GM12878 (cell line): ENCODE measurements at regions of chr5 and their contacts with region 1.

Region 1: DNA sequence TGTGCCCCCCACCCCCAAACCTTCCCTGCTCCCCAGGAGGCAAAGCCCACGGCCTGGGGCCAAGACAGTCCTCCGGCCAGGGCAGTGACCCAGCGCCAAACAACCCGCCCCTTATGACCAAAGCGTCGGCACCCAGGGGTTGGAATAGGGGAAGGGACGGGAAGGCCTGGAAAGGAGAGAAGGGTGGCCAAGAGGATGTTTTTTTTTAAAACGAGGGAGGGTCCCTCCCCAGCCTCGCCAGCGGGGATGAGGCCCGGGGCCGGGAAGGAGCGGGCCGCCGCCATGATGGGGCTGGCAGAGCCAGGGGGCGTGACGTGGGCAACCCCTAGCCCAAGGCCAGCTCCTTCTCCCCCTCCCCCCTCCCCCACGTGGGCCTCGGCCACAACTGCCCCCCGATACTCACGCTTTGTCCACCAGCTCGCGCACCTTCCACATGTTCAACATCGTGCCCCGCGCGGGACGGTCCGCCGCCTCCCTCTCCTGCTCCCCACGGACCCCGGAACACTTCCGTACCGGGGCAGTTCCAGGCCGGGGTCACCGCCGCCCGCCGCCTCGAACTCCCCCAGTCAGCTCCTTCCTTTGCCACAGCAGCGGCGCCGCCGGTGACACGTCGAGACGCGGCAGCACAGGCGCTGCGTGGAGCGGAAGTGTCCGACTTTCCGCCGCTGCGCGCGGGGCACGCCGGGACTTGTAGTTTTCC is at the start of gene CLINT1:
- DNase-seq: no peak
- ATAC-seq: peak; percentile 69
- H3K4me3 ChIP-seq: peak within 1 kb of the TSS; percentile 87
- H3K27ac ChIP-seq: peak within 1 kb of the TSS; percentile 45
- H3K4me1 ChIP-seq: peaks cover 29% of the 10 kb centered on the region
- H3K27me3 ChIP-seq: no peaks in the 10 kb centered on the region
- CTCF ChIP-seq: no peak
- EP300 ChIP-seq: 0 out of 4 replicates have a peak, but pooled peaks of 1 of the 2 experiments have one; percentile 4
- POLR2A ChIP-seq: peak; percentile 82
- RAD21 ChIP-seq: no peak
- polyA plus RNA-seq, gene CLINT1: 30.0 to 40.2 TPM

Region 2: DNA sequence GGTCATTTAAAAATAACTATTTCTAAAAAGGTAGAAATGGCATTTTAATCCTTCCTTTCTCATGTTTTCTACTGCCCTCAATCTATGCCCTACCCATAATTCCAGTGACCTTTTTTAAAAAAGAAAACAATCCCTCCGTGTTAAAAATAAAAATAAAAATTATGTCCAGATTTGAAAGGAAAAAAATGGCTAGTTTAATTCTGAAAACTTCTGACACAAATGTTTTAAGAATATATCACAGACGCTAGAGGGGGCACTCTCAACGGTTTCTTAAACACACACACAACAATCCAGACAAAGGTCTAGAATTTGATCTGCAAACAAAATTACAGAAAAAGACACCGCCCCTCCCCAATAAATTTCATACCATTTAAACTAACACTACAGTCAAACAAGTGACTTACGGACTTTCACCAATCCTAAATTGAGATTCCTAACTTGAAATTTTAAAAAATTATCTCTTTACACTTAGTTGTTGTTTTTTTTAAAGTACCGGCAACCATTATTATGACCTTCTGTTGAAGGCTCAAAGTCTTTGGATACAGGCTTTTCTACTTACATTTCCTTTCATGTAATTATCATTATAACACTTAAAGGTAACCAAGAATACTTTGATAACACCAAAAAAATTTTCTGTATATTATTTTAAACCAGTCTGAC is 38.0 kb before region 1 on chr5:
- CTCF ChIA-PET with region 1: interaction called, 56 read pairs
- POLR2A ChIA-PET with region 1: interaction called, 5 read pairs
- RAD21 ChIA-PET with region 1: interaction called, 8 read pairs
- SMC1A ChIA-PET with region 1: interaction called, 40 read pairs
- in situ Hi-C with region 1: no loop called
- intact Hi-C with region 1: loop called (anchors 2 kb)
- DNase-seq: no peak
- ATAC-seq: peak; percentile 69
- H3K4me3 ChIP-seq: no peak overlapping the region
- H3K27ac ChIP-seq: no peak overlapping the region
- H3K4me1 ChIP-seq: no peaks in the 10 kb centered on the region
- H3K27me3 ChIP-seq: no peaks in the 10 kb centered on the region
- CTCF ChIP-seq: peak; percentile 39 to 56 (median 49); a peak in 5 of 6 replicates
- EP300 ChIP-seq: no peak
- POLR2A ChIP-seq: no peak
- RAD21 ChIP-seq: peak; percentile 63

Region 3: DNA sequence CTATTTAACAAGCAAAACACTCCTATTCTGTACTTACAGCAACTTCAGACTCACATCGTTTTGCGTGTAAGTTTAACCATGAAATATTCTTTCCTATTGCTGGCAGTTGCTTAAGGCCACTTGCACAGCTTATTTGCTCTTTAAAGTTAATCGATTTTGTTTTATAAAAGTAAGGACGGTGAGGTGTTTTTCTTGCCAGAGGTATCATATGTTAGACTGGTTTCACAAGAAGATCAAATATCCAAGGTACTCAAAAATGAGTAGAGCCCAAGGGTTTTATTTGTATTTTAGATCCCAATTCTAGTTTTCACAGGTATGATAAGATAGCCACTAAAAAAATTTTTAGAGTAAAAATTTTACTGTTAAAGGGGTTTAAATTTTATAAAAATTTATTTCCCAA is 15.9 kb before region 1 on chr5:
- CTCF ChIA-PET with region 1: interaction called, 8 read pairs
- POLR2A ChIA-PET with region 1: interaction called, 4 read pairs
- RAD21 ChIA-PET with region 1: interaction called, 9 read pairs
- SMC1A ChIA-PET with region 1: interaction called, 15 read pairs
- in situ Hi-C with region 1: no loop called
- intact Hi-C with region 1: no loop called
- DNase-seq: no peak
- ATAC-seq: no peak
- H3K4me3 ChIP-seq: no peak overlapping the region
- H3K27ac ChIP-seq: no peak overlapping the region
- H3K4me1 ChIP-seq: no peaks in the 10 kb centered on the region
- H3K27me3 ChIP-seq: no peaks in the 10 kb centered on the region
- CTCF ChIP-seq: no peak
- EP300 ChIP-seq: no peak
- POLR2A ChIP-seq: no peak
- RAD21 ChIP-seq: no peak

Region 4: DNA sequence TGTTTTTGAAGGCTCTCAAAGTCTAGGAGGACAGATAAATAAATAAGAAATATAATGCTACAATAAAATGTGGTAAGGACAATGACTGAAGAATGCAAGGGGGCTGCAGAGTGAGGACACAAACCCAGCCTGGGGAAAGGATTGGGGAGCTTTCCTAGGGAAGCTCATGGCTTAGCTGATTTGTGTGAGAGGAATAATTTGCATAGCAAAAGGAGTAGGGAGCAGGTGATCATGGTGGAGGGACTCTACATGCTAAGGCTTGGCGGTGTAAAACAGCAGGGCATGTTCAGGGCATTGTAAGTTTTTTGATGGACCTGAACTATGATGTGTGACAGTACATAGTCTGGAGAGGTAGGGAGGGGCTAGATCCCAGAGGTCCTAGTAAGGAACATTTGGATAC is 49.8 kb after region 1 on chr5:
- CTCF ChIA-PET with region 1: interaction called, 166 read pairs
- POLR2A ChIA-PET with region 1: interaction called, 5 read pairs
- RAD21 ChIA-PET with region 1: interaction called, 66 read pairs
- SMC1A ChIA-PET with region 1: interaction called, 150 read pairs
- in situ Hi-C with region 1: no loop called
- intact Hi-C with region 1: no loop called
- DNase-seq: no peak
- ATAC-seq: no peak
- H3K4me3 ChIP-seq: no peak overlapping the region
- H3K27ac ChIP-seq: no peak overlapping the region
- H3K4me1 ChIP-seq: peaks cover 8% of the 10 kb centered on the region; the same call in 1 of the 2 replicates
- H3K27me3 ChIP-seq: no peaks in the 10 kb centered on the region
- CTCF ChIP-seq: no peak
- EP300 ChIP-seq: no peak
- POLR2A ChIP-seq: no peak
- RAD21 ChIP-seq: no peak

Region 5: DNA sequence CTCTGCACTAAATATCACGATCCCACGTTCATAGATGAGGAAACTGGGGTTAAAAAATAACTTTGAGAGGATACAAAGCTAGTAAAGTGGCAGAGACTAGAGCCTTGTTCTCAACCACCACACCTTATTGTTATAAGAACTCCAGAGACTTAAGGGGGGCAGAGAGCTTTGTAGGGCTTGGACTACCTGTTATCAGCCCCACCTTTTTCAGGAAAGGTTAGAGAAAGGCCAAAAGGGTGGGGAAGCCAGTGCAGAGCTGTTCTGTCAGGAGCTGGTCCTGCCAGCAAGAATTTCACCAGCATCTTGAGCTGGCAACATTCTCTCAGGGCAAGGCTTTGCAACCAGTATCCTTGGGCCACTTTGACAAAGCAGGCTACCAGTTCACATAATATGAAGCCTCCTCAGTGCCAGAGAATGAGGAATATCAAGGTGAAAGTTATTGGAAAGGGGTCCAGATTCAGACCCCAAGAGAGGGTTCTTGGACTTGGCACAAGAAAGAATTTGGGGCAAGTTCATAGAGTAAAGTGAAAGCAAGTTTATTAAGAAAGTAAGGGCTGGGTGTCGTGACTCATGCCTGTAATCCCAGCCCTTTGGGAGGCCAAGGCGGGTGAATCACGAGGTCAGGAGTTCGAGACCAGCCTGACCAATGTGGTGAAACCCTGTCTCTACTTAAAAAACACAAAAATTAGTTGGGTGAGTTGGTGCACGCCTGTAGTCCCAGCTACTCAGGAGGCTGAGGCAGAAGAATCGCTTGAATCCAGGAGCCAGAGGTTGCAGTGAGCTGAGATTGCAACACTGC is 66.5 kb after region 1 on chr5:
- CTCF ChIA-PET with region 1: interaction called, 166 read pairs
- POLR2A ChIA-PET with region 1: interaction called, 3 read pairs
- RAD21 ChIA-PET with region 1: interaction called, 66 read pairs
- SMC1A ChIA-PET with region 1: interaction called, 150 read pairs
- in situ Hi-C with region 1: no loop called
- intact Hi-C with region 1: no loop called
- DNase-seq: no peak
- ATAC-seq: peak; percentile 37
- H3K4me3 ChIP-seq: no peak overlapping the region
- H3K27ac ChIP-seq: no peak overlapping the region
- H3K4me1 ChIP-seq: no peaks in the 10 kb centered on the region
- H3K27me3 ChIP-seq: no peaks in the 10 kb centered on the region
- CTCF ChIP-seq: no peak
- EP300 ChIP-seq: no peak
- POLR2A ChIP-seq: no peak
- RAD21 ChIP-seq: no peak